ENCODE measurements at regions of chr16 and their contacts with region 1.

Region 1: GRCh38 chr16:58551496-58551895 is 36.2 kb downstream of the SETD6 start:
- DNase-seq: no peak
- ATAC-seq: no peak
- H3K4me3 ChIP-seq: no peak overlapping the region
- H3K4me3 Mint-ChIP-seq: no peak overlapping the region
- H3K27ac ChIP-seq: no peak overlapping the region
- H3K27ac Mint-ChIP-seq: peak overlapping the region in 5 of 9 donors; percentile 2 to 34 (median 23)
- H3K4me1 ChIP-seq: no peaks in the 10 kb centered on the region
- H3K4me1 Mint-ChIP-seq: peaks cover 0 to 4% (median 0%) of the 10 kb centered on the region in 7 donors
- H3K27me3 ChIP-seq: no peaks in the 10 kb centered on the region
- H3K27me3 Mint-ChIP-seq: no peaks in the 10 kb centered on the region

Region 2: DNA sequence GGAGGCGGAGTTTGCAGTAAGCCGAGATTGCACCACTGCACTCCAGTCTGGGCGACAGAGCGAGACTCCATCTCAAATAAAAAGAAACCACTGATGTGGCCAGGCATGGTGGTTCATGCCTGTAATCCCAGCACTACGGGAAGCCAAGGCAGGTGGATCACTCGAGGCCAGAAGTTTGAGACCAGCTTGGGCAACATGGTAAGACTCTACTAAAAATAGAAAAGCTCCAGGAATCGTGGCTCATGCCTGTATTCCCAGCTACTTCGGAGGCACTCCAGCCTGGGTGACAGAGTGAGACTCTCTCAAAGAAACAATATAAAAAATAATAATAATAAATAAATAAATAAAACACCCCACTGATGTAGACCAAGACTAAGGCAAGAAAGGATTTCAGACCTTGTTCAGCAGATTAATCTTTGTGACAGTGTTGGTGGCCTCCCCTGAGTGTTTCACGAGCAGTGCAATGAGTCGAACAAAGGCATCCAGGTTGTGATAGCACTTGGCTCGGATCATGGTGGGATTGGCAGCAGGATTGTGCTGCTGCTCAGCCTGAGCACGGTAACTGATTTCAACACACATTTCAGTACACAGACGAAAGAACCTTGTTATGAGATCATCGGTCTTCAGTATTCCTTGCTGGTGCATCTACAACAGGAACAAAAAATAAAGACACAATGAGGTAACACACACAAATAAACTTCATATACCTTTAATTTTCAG is 17.6 kb before region 1 on chr16:
- CTCF ChIA-PET with region 1: no interaction called
- POLR2A ChIA-PET with region 1: no interaction called
- intact Hi-C with region 1: no loop called
- DNase-seq: no peak
- ATAC-seq: no peak
- H3K4me3 ChIP-seq: no peak overlapping the region
- H3K4me3 Mint-ChIP-seq: no peak overlapping the region
- H3K27ac ChIP-seq: no peak overlapping the region
- H3K27ac Mint-ChIP-seq: peak overlapping the region in 1 of 9 donors; percentile 65
- H3K4me1 ChIP-seq: no peaks in the 10 kb centered on the region
- H3K4me1 Mint-ChIP-seq: peaks cover 0 to 5% (median 0%) of the 10 kb centered on the region in 7 donors
- H3K27me3 ChIP-seq: no peaks in the 10 kb centered on the region
- H3K27me3 Mint-ChIP-seq: no peaks in the 10 kb centered on the region

Region 3: DNA sequence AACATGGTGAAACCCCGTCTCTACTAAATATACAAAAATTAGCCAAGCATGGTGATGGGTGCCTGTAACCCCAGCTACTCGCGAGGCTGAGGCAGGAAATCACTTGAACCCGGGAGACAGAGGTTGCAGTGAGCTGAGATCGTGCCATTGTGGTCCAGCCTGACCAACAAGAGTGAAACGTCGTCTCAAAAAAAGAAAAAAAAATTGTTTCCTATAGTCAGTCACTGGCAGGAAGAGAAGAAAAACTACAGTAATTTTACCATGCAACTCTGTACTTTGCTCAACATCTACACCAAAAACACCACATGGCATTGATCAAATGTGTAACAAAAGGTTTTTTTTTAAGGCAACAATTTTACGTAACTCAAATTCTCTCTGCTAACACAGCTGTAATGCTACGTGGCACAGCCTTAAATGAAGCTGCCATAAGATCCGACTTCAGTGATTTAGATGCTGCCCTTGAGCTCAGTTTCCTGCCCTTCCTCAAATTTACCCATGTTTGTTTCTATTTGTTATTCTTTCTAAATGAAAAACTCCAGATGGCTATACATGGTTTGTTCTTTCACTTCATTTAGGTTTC is 37.9 kb after region 1 on chr16:
- CTCF ChIA-PET with region 1: no interaction called
- POLR2A ChIA-PET with region 1: no interaction called
- intact Hi-C with region 1: loop called in 1 of 2 experiments (anchors 2 kb)
- DNase-seq: no peak
- ATAC-seq: no peak
- H3K4me3 ChIP-seq: no peak overlapping the region
- H3K4me3 Mint-ChIP-seq: no peak overlapping the region
- H3K27ac ChIP-seq: no peak overlapping the region
- H3K27ac Mint-ChIP-seq: peak overlapping the region in 6 of 9 donors; percentile 15 to 47 (median 22)
- H3K4me1 ChIP-seq: peaks cover 0 to 4% of the 10 kb centered on the region in 2 donors
- H3K4me1 Mint-ChIP-seq: peaks cover 13 to 37% (median 15%) of the 10 kb centered on the region in 7 donors
- H3K27me3 ChIP-seq: no peaks in the 10 kb centered on the region
- H3K27me3 Mint-ChIP-seq: no peaks in the 10 kb centered on the region